Upper lobe of right lung (tissue), 1 donor: ENCODE measurements at regions of chr2 and their contacts with region 1.

Region 1: DNA sequence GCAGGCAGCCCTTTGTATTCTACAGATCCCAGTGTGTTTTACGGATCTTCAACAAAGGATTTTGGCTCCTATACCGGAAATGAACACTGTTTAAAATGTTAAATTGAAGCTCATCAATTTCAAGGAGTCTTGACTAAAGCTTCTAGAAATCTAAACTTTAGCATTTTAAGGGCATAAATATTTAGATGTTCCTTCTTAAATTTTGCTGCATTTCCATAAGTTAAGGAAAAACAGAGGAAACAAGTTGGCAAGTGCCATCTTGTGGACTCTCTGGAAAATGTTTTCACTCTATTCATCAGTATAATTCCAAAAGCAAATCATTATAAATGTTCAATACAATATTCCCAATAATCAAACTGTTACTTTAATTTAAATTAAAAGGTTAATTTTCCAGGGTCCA is 19.6 kb downstream of the CHN1 start:
- DNase-seq: no peak
- ATAC-seq: no peak
- H3K4me3 ChIP-seq: no peak overlapping the region
- H3K27ac ChIP-seq: no peak overlapping the region
- H3K4me1 ChIP-seq: no peaks in the 10 kb centered on the region
- H3K27me3 ChIP-seq: no peaks in the 10 kb centered on the region
- CTCF ChIP-seq: peak; percentile 55

Region 2: GRCh38 chr2:174697255-174697654 is 288.4 kb before region 1 on chr2:
- intact Hi-C with region 1: no loop called
- DNase-seq: no peak
- ATAC-seq: peak; percentile 94
- H3K4me3 ChIP-seq: no peak overlapping the region
- H3K27ac ChIP-seq: no peak overlapping the region
- H3K4me1 ChIP-seq: no peaks in the 10 kb centered on the region
- H3K27me3 ChIP-seq: no peaks in the 10 kb centered on the region
- CTCF ChIP-seq: peak; percentile 78

Region 3: DNA sequence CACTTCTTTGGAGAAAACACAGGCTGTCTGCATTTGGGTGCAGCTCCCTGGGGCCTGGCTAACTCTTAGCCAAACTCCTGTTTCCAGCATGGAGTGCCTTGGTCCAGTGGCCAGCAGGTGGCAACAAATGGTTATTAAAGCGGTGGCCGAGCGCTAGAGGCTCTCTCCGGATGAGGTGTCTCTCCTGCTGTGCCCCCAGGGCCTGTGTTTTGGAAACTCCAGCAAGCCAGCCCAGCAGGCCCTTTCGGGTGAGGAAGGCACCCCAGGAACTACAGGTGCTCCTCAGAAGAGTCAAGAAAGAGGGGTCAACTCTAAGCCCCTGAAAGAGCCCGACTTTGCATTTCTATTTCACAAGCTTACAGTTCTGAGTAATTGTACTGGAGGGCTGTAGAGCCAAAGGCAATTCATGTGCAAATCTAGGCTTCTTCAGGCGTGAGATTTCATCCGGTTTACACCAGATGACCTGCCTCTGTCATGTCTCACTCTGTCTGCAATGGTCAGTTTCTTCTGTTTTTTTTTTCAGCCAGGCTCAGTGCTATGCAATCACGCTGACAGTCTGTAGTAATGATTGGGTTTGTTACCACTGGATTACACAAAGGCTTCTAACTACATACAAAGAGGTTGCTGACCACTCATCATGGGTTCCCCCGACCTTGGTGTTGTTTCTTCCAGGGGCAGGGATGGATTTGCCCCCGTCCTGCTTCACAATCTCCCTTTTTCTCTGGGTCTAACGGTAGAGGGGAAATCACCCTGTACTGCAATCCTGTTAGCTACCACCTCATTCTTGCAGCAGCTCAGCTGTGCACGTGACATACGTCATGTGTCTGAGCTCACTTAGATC is 213.8 kb before region 1 on chr2:
- intact Hi-C with region 1: loop called (anchors 10 kb)
- DNase-seq: peak; percentile 82
- ATAC-seq: peak; percentile 92
- H3K4me3 ChIP-seq: no peak overlapping the region
- H3K27ac ChIP-seq: peak overlapping the region; percentile 38
- H3K4me1 ChIP-seq: peaks cover 4% of the 10 kb centered on the region
- H3K27me3 ChIP-seq: no peaks in the 10 kb centered on the region
- CTCF ChIP-seq: peak; percentile 81